ENCODE measurements at regions of chr1 and their contacts with region 1.

Region 1: DNA sequence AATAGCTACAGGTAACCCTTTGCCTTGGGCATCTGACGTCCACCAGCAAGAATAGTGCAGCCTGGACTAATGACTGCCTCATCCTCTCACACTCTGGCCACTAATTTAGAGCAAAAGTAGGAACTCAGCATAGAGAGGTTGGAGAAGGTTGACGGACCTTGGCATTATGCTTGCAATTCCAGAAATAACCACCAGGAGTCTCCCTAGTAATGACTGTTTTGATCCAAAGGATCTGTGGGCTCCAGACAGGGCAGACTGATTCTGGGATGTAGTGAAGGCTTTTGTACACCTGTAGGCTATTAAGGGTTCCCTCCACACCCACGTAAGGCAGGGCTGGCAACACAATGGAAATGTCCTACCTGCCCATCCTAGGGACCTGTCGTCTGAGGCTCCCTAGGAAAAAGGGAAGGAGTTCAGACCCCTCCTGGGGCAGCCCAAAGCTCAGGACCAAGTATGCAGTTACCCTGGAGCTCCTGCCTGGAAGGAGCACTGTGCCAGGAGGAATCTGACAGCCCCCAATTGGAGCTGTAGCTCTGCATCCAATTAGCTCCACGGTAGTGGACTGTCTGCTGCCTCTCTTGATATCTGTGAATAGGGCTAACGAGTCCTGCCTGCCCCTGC is 91.0 kb upstream of the TMEM51 start:
- DNase-seq: no peak

Region 2: GRCh38 chr1:13911697-13912619 is 1150.6 kb before region 1 on chr1:
- intact Hi-C with region 1: loop called in 1 of 2 experiments (anchors 5 kb)
- DNase-seq: no peak

Region 3: GRCh38 chr1:14970115-14970798 is 92.3 kb before region 1 on chr1:
- intact Hi-C with region 1: no loop called
- DNase-seq: peak; percentile 90

Region 4: DNA sequence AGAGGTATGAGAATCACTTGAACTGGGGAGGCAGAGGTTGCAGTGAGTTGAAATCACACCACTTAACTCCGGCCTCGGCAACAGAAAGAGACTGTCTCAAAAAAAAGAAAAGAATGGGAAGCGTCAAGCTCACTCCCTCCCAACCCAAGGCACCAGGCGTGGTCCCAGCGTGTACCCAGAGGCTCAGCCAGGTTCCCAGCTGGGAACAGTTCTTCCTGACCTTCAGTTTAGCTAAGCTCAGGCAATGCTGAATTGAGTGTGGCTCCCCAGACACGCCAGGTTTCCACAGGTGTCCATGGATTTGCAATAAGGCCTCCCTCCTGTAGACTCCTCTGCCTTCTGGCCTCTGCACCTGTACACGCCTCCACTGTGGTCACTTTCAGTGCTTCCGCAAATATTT is 49.8 kb before region 1 on chr1:
- intact Hi-C with region 1: loop called in 1 of 2 experiments (anchors 1 kb)
- DNase-seq: no peak

Region 5: DNA sequence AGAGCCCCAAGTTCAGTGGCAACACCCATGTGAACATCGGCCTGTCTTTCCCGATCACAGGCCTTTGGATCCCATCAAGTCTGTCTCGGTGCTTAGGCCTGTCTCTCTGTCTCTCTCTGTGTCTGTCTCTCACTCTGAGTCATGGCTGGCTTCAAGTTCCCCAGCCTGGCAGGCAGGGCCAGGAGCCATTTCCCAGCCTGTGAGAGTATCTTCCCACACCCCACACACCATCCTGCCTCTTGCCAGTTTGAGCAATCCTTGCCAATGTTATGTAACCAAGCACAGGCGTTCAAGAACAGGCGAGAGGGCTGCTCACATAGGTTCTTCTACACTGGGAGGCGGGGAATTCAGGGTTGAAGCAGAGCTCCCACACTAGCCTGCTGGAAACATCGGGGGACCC is 21.0 kb after region 1 on chr1:
- intact Hi-C with region 1: no loop called
- DNase-seq: no peak

Measured in posterior vena cava (tissue), 2 donors.